ENCODE measurements at regions of chr10 and their contacts with region 1.

Region 1: DNA sequence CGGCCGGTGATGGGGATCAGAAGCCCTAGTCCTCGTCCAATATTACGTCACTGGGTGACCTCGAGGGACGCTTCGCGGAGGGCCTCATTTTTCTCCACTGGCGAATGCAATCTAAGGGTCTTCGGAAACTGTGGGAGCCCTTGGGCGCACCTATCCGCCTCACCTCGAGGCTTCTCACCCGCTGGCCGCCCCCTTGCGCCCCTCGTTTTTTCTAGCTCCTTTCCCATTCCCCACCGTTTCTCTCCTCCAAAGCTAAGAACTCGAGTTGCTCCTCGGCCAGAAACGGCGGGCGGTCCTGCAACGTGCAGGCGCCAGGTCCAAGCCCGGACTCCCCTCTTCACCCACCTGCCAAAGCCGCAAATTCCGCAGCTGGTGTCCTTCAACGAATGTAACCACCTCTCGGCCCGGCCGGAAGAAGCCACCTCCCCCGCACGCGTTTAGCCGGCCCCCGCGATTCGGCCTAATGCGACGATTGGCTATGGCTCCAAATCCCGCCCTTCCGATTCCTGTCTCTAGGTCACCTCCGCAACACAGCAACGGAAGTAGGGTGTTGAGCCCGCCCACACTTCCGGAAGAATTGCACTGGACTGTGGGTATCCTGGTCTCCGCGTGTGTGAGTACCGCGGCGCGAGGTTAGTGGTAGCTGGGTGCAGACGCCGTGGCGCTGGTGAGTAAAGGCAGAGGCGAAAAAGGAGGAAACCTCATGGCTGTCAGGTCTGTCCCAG is at the starts of genes ATP5MK and PDCD11:
- H3K4me3 ChIP-seq: peak within 1 kb of the TSS; percentile 55
- H3K27ac ChIP-seq: peak within 1 kb of the TSS; percentile 74
- H3K4me1 ChIP-seq: peaks cover 6% of the 10 kb centered on the region
- CTCF ChIP-seq: peak; percentile 86

Region 2: GRCh38 chr10:103350501-103351260 is 45.5 kb before region 1 on chr10 and contains the start of gene PCGF6:
- CTCF ChIA-PET with region 1: no interaction called
- POLR2A ChIA-PET with region 1: interaction called, 15 read pairs
- H3K4me3 ChIP-seq: peak within 1 kb of the TSS; percentile 70
- H3K27ac ChIP-seq: peak within 1 kb of the TSS; percentile 90
- H3K4me1 ChIP-seq: no peaks in the 10 kb centered on the region
- CTCF ChIP-seq: peak; percentile 40; the same call in 1 of the 2 replicates

Region 3: DNA sequence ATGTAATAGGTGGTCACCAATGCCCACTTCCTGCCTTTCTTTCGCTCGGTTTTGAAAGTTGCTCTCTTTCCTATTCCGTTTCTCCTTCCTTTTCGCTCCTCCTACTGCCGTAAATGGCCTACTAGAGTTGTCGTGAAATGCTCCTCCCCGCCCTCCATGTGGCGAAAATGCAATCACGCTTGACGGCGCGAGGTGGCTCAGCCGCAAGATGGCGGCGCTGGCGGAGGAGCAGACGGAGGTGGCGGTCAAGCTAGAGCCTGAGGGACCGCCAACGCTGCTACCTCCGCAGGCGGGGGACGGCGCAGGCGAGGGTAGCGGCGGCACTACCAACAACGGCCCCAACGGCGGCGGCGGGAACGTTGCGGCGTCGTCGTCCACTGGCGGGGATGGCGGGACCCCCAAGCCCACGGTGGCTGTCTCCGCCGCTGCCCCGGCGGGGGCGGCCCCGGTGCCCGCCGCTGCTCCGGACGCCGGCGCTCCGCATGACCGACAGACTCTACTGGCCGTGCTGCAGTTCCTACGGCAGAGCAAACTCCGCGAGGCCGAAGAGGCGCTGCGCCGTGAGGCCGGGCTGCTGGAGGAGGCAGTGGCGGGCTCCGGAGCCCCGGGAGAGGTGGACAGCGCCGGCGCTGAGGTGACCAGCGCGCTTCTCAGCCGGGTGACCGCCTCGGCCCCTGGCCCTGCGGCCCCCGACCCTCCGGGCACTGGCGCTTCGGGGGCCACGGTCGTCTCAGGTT is 28.3 kb before region 1 on chr10 and contains the start of gene TAF5:
- CTCF ChIA-PET with region 1: no interaction called
- POLR2A ChIA-PET with region 1: interaction called, 12 read pairs
- H3K4me3 ChIP-seq: peak within 1 kb of the TSS; percentile 98
- H3K27ac ChIP-seq: peak within 1 kb of the TSS; percentile 89
- H3K4me1 ChIP-seq: peaks cover 3% of the 10 kb centered on the region; the same call in 1 of the 2 replicates
- CTCF ChIP-seq: no peak

Region 4: GRCh38 chr10:103373544-103373943 is 22.7 kb before region 1 on chr10:
- CTCF ChIA-PET with region 1: no interaction called
- POLR2A ChIA-PET with region 1: interaction called, 12 read pairs
- H3K4me3 ChIP-seq: no peak overlapping the region
- H3K27ac ChIP-seq: no peak overlapping the region
- H3K4me1 ChIP-seq: peaks cover 3% of the 10 kb centered on the region; the same call in 1 of the 2 replicates
- CTCF ChIP-seq: no peak

Region 5: GRCh38 chr10:103645141-103646054 is 249.2 kb after region 1 on chr10:
- CTCF ChIA-PET with region 1: no interaction called
- POLR2A ChIA-PET with region 1: no interaction called
- H3K4me3 ChIP-seq: no peak overlapping the region
- H3K27ac ChIP-seq: no peak overlapping the region
- H3K4me1 ChIP-seq: no peaks in the 10 kb centered on the region; the same call in 1 of the 2 replicates
- CTCF ChIP-seq: no peak

Measured in HEK293 (cell line).